MCF 10A (cell line): ENCODE measurements at regions of chr1 and their contacts with region 1.

Region 1: GRCh38 chr1:211514030-211514754 is 22.2 kb upstream of the RD3 start:
- DNase-seq: peak; percentile 99
- H3K4me3 Mint-ChIP-seq: no peak overlapping the region
- H3K27ac Mint-ChIP-seq: peak overlapping the region; percentile 7
- H3K4me1 Mint-ChIP-seq: peaks cover 41% of the 10 kb centered on the region
- H3K27me3 Mint-ChIP-seq: no peaks in the 10 kb centered on the region
- CTCF ChIP-seq: peak; percentile 96

Region 2: DNA sequence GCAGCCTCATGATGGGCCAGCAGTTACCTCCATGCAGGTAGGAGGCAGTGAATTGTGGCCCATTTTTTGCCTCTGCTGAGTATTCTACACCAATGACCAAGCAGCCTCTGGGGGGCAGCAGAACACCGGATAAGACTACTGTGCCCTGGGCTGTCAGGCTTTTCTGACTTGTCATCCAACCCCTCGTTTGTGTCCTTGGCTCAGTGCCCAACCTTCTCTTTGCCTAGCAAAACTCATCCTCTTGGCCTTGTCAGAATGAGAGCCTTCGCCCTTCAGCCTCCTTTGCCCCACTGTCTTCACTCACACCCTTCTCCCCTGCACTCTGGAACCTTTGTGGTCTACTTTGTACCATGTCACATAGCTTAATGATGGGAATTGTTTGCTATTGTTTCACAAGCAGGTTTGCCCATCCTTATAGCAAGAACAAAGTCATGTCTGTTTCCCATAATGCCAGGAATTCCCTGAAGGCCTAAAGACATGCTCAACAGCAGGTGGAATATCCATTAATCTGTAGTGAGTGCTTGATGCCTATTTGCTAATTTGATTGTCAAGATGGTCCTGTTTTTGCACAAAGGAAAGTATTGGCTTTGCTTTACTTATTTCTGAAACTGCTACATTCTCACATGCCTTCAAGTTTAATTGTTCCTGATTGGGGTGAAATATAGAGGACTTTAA is 929.6 kb before region 1 on chr1:
- CTCF ChIA-PET with region 1: interaction called, 5 read pairs
- POLR2A ChIA-PET with region 1: no interaction called
- intact Hi-C with region 1: loop called (anchors 2 kb)
- DNase-seq: peak; percentile 97
- H3K4me3 Mint-ChIP-seq: no peak overlapping the region
- H3K27ac Mint-ChIP-seq: no peak overlapping the region
- H3K4me1 Mint-ChIP-seq: peaks cover 6% of the 10 kb centered on the region
- H3K27me3 Mint-ChIP-seq: no peaks in the 10 kb centered on the region
- CTCF ChIP-seq: peak; percentile 100

Region 3: DNA sequence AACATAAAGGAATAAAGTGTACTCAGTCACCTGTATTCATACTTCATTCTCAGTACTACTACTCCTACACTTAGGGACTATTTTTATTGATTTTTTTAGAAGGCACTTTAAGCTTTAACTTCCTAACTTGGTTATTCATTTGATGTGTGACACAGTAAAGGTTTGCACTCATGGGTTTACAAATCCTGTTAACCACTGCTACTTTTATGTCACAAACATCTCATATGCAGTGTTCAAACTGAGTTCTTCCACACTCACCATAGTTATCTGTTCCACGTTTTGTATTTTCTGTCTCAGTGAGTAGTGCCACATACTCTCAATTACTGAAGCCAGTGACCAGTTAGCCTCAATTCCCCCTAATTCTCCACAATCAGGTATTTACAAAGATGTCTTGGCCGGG is 221.8 kb before region 1 on chr1:
- CTCF ChIA-PET with region 1: interaction called, 12 read pairs
- POLR2A ChIA-PET with region 1: no interaction called
- intact Hi-C with region 1: no loop called
- DNase-seq: no peak
- H3K4me3 Mint-ChIP-seq: no peak overlapping the region
- H3K27ac Mint-ChIP-seq: no peak overlapping the region
- H3K4me1 Mint-ChIP-seq: peaks cover 7% of the 10 kb centered on the region
- H3K27me3 Mint-ChIP-seq: no peaks in the 10 kb centered on the region
- CTCF ChIP-seq: no peak

Region 4: GRCh38 chr1:211469938-211470529 is 44.2 kb before region 1 on chr1:
- CTCF ChIA-PET with region 1: interaction called, 682 read pairs
- POLR2A ChIA-PET with region 1: interaction called, 3 read pairs
- intact Hi-C with region 1: loop called (anchors 1 kb)
- DNase-seq: peak; percentile 92
- H3K4me3 Mint-ChIP-seq: no peak overlapping the region
- H3K27ac Mint-ChIP-seq: no peak overlapping the region
- H3K4me1 Mint-ChIP-seq: peaks cover 15% of the 10 kb centered on the region
- H3K27me3 Mint-ChIP-seq: no peaks in the 10 kb centered on the region
- CTCF ChIP-seq: peak; percentile 98

Region 5: GRCh38 chr1:211541720-211542453 is 27.7 kb after region 1 on chr1:
- CTCF ChIA-PET with region 1: interaction called, 61 read pairs
- POLR2A ChIA-PET with region 1: no interaction called
- intact Hi-C with region 1: no loop called
- DNase-seq: no peak
- H3K4me3 Mint-ChIP-seq: no peak overlapping the region
- H3K27ac Mint-ChIP-seq: no peak overlapping the region
- H3K4me1 Mint-ChIP-seq: peaks cover 17% of the 10 kb centered on the region
- H3K27me3 Mint-ChIP-seq: no peaks in the 10 kb centered on the region
- CTCF ChIP-seq: no peak

Region 6: DNA sequence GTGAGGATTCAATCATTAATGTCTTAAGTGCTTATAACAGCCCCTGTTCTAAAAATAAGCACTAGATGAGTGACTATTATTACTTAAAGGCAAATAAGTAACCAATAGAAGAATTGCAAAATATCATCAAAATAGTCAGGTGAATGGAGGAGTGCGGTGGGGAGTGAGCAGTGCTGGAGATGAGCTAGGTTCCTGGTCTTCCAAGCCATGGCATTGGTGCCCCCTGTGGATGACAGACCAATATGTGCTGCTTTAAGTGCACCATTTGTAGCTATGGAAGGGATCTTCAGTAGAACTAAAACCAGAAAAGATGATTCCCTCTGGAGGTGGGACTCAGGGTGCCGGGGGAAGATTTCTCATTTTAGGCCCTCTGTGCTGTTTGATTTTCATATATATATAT is 110.8 kb after region 1 on chr1:
- CTCF ChIA-PET with region 1: interaction called, 37 read pairs
- POLR2A ChIA-PET with region 1: no interaction called
- intact Hi-C with region 1: loop called (anchors 1 kb)
- DNase-seq: peak; percentile 86
- H3K4me3 Mint-ChIP-seq: no peak overlapping the region
- H3K27ac Mint-ChIP-seq: no peak overlapping the region
- H3K4me1 Mint-ChIP-seq: no peaks in the 10 kb centered on the region
- H3K27me3 Mint-ChIP-seq: no peaks in the 10 kb centered on the region
- CTCF ChIP-seq: peak; percentile 43

Region 7: GRCh38 chr1:211675230-211676105 is 161.3 kb after region 1 on chr1 and contains the start of gene NEK2:
- CTCF ChIA-PET with region 1: interaction called, 32 read pairs
- POLR2A ChIA-PET with region 1: interaction called, 3 read pairs
- intact Hi-C with region 1: no loop called
- DNase-seq: peak; percentile 100
- H3K4me3 Mint-ChIP-seq: peak within 1 kb of the TSS; percentile 92
- H3K27ac Mint-ChIP-seq: peak within 1 kb of the TSS; percentile 91
- H3K4me1 Mint-ChIP-seq: peaks cover 26% of the 10 kb centered on the region
- H3K27me3 Mint-ChIP-seq: no peaks in the 10 kb centered on the region
- CTCF ChIP-seq: no peak
- total RNA-seq, gene NEK2: 33.4 and 44.5 TPM in 2 replicates